Activated CD8-positive, alpha-beta T cell treated with anti-CD3 and anti-CD28 coated beads for 36 hours (primary cell): ENCODE measurements at regions of chr11 and their contacts with region 1.

Region 1: GRCh38 chr11:67239783-67240575 is 26.3 kb upstream of the GRK2 start:
- DNase-seq: peak; percentile 98
- ATAC-seq: peak; percentile 94
- H3K4me3 Mint-ChIP-seq: peak overlapping the region; percentile 96
- H3K27ac Mint-ChIP-seq: peak overlapping the region; percentile 100
- H3K4me1 Mint-ChIP-seq: peaks cover 43% of the 10 kb centered on the region
- H3K27me3 Mint-ChIP-seq: no peaks in the 10 kb centered on the region
- CTCF ChIP-seq: no peak

Region 2: DNA sequence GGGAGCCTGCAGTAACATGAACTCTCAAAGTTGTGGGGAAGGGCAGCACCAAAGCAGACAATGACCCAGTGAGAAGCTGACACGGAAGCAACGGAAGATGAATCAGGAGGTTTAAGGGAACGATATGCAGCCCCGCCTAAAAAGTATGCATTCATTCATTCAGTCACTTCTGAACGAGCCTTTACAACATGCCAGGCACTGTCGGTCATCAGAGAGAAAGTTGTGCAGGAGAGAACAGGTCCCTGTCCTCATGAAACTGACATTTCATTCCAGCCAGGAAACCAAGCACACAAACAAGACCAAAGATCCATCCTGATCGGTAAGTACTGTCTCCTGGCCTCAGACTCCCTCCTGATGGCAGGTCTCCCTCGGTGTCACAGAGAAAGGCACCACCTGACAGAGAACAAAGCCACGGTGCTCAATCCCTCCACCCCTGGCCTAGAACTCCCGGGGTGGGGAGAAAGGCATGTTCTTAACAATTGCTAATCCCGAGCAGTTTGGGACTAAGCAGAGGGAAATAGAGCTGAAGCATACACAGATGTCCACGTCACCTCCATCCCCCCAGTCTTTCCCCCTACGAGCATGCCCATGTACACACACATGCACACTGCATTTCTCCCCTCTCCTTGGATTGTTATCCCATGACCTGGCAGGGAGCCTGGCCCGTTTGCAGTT is 333.8 kb before region 1 on chr11:
- CTCF ChIA-PET with region 1: no interaction called
- POLR2A ChIA-PET with region 1: no interaction called
- intact Hi-C with region 1: no loop called
- DNase-seq: no peak
- ATAC-seq: no peak
- H3K4me3 Mint-ChIP-seq: no peak overlapping the region
- H3K27ac Mint-ChIP-seq: no peak overlapping the region
- H3K4me1 Mint-ChIP-seq: no peaks in the 10 kb centered on the region
- H3K27me3 Mint-ChIP-seq: no peaks in the 10 kb centered on the region
- CTCF ChIP-seq: no peak

Region 3: DNA sequence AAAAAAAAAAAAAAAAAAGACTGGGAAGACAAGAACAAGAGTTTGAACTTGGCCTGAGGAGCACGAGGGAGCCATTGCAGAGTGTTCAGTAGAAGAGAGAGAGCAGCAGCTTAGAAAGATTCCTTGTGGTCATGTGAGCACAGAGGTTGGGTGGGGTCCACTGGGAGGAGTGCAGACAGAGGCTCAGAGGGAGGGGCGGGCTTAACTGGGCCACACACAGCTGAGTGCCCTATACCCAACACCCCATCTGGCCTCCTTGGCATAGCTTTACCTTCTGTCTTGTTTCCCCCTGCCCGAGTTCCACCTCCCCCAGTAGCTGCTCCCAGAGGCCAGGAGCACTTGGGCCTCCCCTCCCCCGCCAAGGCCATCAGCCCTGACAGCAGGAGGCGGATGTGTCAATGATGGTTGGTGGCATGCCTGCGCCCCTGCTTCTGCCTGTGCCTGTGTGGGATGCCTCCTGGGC is 252.8 kb before region 1 on chr11:
- CTCF ChIA-PET with region 1: no interaction called
- POLR2A ChIA-PET with region 1: no interaction called
- intact Hi-C with region 1: no loop called
- DNase-seq: no peak
- ATAC-seq: no peak
- H3K4me3 Mint-ChIP-seq: no peak overlapping the region
- H3K27ac Mint-ChIP-seq: no peak overlapping the region
- H3K4me1 Mint-ChIP-seq: peaks cover 4% of the 10 kb centered on the region
- H3K27me3 Mint-ChIP-seq: peaks cover 9% of the 10 kb centered on the region
- CTCF ChIP-seq: no peak

Region 4: DNA sequence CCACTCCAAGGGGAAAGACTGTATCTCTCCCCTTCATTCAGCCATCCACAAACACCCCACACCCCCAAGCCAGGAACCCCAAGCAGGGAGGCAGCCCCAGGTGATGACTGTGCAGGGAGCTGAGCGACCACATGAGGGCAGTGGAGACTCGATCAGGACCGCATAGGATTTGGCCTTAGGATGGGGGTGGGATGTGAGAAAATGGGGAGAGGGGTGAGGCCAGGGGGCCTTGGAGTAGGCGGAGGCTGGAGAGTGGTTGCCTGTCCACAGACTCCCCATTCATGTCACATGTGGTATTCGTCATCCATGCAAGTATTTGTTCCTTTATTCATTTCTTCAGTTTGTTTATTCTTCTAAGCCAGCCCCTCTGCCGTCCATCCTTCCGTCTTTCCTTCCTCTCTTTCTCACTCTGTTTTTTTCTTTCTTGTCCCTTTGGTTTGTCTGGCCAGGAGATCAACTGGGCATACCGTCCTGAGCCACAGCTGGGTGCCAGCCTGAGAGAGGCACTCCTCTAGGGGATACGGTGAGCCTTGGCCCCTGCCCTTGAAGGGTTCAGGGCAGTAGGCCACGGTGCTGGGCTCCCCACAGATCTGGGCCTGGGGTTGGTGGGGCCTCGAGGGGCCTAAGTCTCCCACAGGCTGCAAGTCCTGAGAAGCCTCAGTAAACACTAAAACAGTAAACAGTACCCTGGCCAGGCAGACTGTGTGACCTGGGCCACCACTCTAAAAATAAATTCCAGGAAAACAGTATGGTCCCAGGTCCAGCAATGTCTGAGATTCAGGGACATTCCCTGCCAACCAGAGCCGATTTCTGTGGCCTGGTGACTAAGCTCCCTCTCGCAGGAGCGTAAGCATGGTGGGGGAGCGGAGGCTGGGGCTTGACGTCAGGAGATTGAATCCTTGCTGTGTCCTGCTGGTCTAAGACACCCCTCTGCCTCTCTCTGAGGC is 185.8 kb before region 1 on chr11:
- CTCF ChIA-PET with region 1: no interaction called
- POLR2A ChIA-PET with region 1: no interaction called
- intact Hi-C with region 1: no loop called
- DNase-seq: peak; percentile 71
- ATAC-seq: peak; percentile 77
- H3K4me3 Mint-ChIP-seq: no peak overlapping the region
- H3K27ac Mint-ChIP-seq: no peak overlapping the region
- H3K4me1 Mint-ChIP-seq: peaks cover 15% of the 10 kb centered on the region
- H3K27me3 Mint-ChIP-seq: peaks cover 10% of the 10 kb centered on the region
- CTCF ChIP-seq: peak; percentile 68

Region 5: DNA sequence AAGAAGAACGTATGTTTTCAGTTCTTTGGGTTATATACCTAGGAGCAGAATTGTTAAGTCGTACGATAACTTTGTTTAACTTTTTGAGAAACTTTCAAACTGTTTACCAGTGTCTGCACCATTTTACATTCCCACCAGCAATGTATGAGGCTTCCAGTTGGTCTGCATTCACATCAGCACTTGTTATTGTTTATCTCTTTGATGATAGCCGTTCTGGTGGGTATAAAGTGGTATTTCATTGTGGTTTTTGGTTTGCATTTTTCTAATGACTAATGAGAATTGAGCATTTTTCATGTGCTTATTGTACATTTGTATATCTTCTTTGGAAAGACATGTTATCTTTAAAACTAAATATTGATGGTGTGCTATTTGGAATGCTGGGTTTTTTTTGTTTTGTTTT is 61.1 kb before region 1 on chr11:
- CTCF ChIA-PET with region 1: no interaction called
- POLR2A ChIA-PET with region 1: no interaction called
- intact Hi-C with region 1: no loop called
- DNase-seq: no peak
- ATAC-seq: no peak
- H3K4me3 Mint-ChIP-seq: no peak overlapping the region
- H3K27ac Mint-ChIP-seq: no peak overlapping the region
- H3K4me1 Mint-ChIP-seq: peaks cover 26% of the 10 kb centered on the region
- H3K27me3 Mint-ChIP-seq: no peaks in the 10 kb centered on the region
- CTCF ChIP-seq: no peak

Region 6: GRCh38 chr11:67252831-67253239 is 12.9 kb after region 1 on chr11:
- CTCF ChIA-PET with region 1: interaction called, 6 read pairs
- POLR2A ChIA-PET with region 1: interaction called, 25 read pairs
- intact Hi-C with region 1: no loop called
- DNase-seq: peak; percentile 56
- ATAC-seq: peak; percentile 86
- H3K4me3 Mint-ChIP-seq: no peak overlapping the region
- H3K27ac Mint-ChIP-seq: peak overlapping the region; percentile 58
- H3K4me1 Mint-ChIP-seq: peaks cover 39% of the 10 kb centered on the region
- H3K27me3 Mint-ChIP-seq: no peaks in the 10 kb centered on the region
- CTCF ChIP-seq: peak; percentile 35

Region 7: DNA sequence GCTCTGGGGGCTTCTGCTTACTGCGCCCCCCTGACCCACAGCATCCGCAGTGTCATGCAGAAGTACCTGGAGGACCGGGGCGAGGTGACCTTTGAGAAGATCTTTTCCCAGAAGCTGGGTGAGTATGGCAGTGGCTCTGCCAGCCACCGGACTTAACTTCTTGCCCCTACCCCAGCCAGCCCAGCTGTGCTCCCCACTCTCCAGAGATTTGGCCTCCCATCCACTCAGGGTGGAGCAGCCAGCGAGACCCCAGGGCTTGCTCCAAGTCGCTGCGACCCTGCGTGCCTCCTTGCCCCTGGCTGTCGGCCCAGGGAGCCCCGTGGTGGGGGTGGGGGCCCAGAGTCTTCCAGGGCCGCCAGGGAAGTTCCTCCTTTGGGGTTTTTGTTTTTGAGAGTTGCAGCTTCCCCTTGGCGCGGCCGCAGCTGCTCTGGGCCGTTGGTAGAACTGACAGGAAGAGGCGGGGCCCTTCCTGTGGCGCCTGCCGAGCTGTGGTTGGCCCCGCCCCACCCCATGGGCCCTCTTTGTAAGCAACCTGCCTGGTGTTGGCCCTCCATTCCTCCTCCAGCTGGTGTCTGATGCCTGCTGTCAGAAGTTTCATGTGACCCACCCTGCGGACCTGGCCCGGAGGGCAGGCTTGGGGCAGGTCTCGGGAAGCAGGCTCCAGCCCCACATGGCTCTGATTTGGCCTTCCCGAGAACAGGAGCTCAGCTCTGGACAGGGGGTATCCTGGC is 37.4 kb after region 1 on chr11:
- CTCF ChIA-PET with region 1: no interaction called
- POLR2A ChIA-PET with region 1: interaction called, 38 read pairs
- intact Hi-C with region 1: no loop called
- DNase-seq: peak; percentile 96
- ATAC-seq: peak; percentile 85
- H3K4me3 Mint-ChIP-seq: peak overlapping the region; percentile 71
- H3K27ac Mint-ChIP-seq: peak overlapping the region; percentile 97
- H3K4me1 Mint-ChIP-seq: peaks cover 53% of the 10 kb centered on the region
- H3K27me3 Mint-ChIP-seq: no peaks in the 10 kb centered on the region
- CTCF ChIP-seq: no peak